Heart right ventricle (tissue), 16 donors: ENCODE measurements at regions of chr15 and their contacts with region 1.

Region 1: DNA sequence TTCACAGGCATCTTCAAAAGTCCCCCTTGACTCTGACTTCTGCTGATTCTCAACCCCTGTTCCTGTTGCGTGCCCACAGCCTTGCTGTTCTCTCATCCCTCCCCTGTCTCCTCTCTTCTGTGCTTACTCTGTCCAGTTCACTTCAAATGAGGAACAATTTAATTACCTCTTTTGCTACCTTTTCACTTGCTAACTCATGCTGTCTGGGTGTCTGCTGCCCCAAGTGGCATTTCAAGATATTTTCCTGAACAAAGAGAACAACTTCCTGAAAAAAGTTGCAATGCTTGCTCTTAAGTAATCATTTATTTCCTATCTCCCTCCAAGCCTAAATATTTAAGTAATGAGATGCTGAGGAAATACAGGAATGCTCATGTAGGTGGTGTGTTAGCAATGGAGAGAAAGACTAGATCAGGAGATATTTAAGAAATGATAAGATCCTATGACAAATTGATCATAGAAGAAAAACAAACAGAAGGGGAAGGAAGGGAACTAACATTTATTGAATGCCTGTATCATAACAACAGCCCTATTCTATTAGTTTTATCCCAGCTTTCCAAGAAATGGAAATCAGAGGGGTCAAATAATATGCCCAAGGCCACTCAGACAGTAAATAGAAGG is 42.2 kb downstream of the SV2B start:
- DNase-seq: no peak
- ATAC-seq: no peak
- H3K4me3 ChIP-seq: no peak overlapping the region
- H3K27ac ChIP-seq: no peak overlapping the region
- H3K4me1 ChIP-seq: peaks cover 0 to 3% (median 0%) of the 10 kb centered on the region in 9 donors
- H3K27me3 ChIP-seq: peaks cover 0 to 2% (median 0%) of the 10 kb centered on the region in 7 donors
- CTCF ChIP-seq: peak in 8 of 9 donors; percentile 18 to 58 (median 44)

Region 2: GRCh38 chr15:91049378-91050127 is 92.7 kb before region 1 on chr15:
- intact Hi-C with region 1: loop called in 2 of 10 experiments (anchors 10 kb)
- DNase-seq: peak in 1 of 2 donors; percentile 48
- ATAC-seq: peak; percentile 58 to 90 (median 86)
- H3K4me3 ChIP-seq: no peak overlapping the region
- H3K27ac ChIP-seq: no peak overlapping the region
- H3K4me1 ChIP-seq: peaks cover 0 to 12% (median 0%) of the 10 kb centered on the region in 9 donors
- H3K27me3 ChIP-seq: peaks cover 0 to 15% (median 6%) of the 10 kb centered on the region in 7 donors
- CTCF ChIP-seq: peak; percentile 32 to 74 (median 65)

Region 3: DNA sequence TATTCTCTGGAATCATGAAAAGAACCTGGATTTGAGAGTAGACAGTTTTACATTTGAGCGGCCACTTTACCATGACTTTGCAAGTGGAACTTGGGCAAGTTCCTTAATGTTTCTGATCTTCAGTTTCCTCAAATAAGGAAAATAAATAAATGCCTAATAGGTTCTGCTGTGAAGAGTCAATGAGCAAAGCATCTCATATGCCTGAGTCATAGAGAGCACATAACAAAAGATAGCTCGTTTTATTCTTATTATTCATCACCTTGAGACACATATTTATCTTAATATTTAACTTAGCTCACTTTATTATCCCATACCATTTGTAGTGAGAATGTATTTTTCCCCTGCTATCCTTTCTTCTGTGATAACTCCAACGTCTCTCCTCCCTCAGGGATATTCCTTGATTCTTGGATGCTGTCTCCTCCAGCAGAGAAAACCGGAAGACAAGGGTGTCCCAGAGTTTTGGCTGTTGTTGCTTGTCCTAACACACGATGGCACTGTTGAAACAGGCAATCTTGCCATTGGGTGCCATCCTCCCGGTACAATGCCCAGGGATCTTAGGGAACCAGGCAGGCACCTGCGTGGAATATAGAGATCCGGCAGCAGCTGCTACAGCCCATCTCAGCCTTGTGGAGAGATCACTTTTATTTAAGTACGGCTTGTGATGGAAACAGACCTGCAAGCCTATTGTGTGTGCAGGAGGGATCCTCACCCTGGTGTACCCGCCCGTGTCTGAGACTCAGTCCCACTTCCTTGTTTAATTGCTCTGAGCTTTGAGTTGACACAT is 86.5 kb before region 1 on chr15:
- intact Hi-C with region 1: loop called in 4 of 10 experiments (anchors 5 to 10 kb)
- DNase-seq: peak; percentile 15 to 54
- ATAC-seq: peak; percentile 65 to 90 (median 75)
- H3K4me3 ChIP-seq: no peak overlapping the region
- H3K27ac ChIP-seq: no peak overlapping the region
- H3K4me1 ChIP-seq: peaks cover 0 to 6% (median 0%) of the 10 kb centered on the region in 9 donors
- H3K27me3 ChIP-seq: peaks cover 0 to 59% (median 25%) of the 10 kb centered on the region in 7 donors
- CTCF ChIP-seq: peak; percentile 53 to 88 (median 77)

Region 4: DNA sequence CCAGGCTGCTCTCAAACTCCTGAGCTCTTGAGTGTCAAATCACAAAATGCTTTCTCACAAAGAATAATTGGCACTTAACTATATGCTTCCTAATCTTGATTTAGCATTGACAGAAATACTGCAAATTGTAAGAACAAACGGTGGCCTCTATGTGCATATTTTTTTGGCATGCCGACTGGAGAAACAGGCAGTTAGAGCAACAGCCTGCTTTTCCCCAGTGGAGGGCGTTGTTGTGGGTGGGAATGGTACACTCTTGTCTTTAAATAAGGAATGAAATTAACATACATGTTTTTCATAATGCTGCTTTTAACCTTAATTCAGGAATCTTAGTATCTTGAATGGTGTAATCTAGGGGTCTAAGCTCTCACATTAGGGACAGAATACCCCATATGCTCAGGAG is 73.3 kb before region 1 on chr15:
- intact Hi-C with region 1: loop called in 1 of 10 experiments (anchors 10 kb)
- DNase-seq: no peak
- ATAC-seq: no peak
- H3K4me3 ChIP-seq: no peak overlapping the region
- H3K27ac ChIP-seq: no peak overlapping the region
- H3K4me1 ChIP-seq: no peaks in the 10 kb centered on the region
- H3K27me3 ChIP-seq: peaks cover 0 to 38% (median 12%) of the 10 kb centered on the region in 7 donors
- CTCF ChIP-seq: no peak

Region 5: GRCh38 chr15:91192690-91193377 is 50.6 kb after region 1 on chr15:
- intact Hi-C with region 1: loop called in 1 of 10 experiments (anchors 10 kb)
- DNase-seq: no peak
- ATAC-seq: no peak
- H3K4me3 ChIP-seq: no peak overlapping the region
- H3K27ac ChIP-seq: no peak overlapping the region
- H3K4me1 ChIP-seq: peaks cover 0 to 2% (median 0%) of the 10 kb centered on the region in 9 donors
- H3K27me3 ChIP-seq: peaks cover 0 to 4% (median 0%) of the 10 kb centered on the region in 7 donors
- CTCF ChIP-seq: no peak